CD8-positive, alpha-beta T cell (primary cell): ENCODE measurements at regions of chr15 and their contacts with region 1.

Region 1: GRCh38 chr15:31365655-31366127 is 39.1 kb downstream of the KLF13 start:
- DNase-seq: peak; percentile 59 to 92 (median 84)
- ATAC-seq: peak; percentile 47
- H3K4me3 ChIP-seq: peak overlapping the region; percentile 32 to 59
- H3K4me3 Mint-ChIP-seq: peak overlapping the region; percentile 81
- H3K27ac ChIP-seq: peak overlapping the region; percentile 68 to 93
- H3K27ac Mint-ChIP-seq: peak overlapping the region; percentile 97
- H3K4me1 ChIP-seq: peaks cover 97% of the 10 kb centered on the region
- H3K4me1 Mint-ChIP-seq: peaks cover 96% of the 10 kb centered on the region
- H3K27me3 ChIP-seq: no peaks in the 10 kb centered on the region
- H3K27me3 Mint-ChIP-seq: no peaks in the 10 kb centered on the region
- CTCF ChIP-seq: peak; percentile 57

Region 2: DNA sequence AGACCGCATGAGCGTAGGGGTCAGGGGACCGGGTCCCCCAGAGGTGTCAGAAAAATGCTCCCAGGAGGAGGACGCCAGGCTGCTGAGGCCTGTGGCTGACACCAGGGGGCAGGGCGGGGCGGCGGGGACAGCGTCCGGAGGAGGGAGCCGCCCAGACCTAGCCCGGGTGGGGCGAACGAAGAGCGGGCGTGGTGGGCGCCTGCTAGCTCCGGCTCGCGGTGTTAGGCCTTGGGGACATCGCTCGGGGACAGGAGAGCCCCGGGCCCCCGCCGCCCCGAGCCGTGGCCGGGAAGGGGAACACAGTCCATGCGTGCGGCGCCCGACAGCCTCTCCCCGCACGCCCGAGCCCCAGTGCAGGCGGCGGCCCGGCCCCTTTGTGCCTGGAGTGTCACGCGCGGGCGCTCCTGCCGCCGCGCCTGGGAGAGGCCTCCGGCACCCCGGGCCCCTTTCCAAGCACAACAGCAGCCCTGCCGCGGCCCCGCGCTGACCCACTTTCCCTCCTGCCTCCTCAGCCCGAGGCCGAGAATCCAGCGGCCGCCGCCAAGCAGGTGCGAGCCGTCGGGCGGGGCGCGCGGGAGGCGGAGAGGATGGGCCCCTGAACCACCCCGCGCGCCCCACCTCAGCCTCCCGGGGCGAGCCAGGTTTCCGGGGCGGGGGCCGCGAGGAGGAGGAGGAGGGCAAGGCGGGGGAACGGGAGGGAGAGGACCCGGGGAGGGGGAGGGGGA is 150.0 kb before region 1 on chr15:
- CTCF ChIA-PET with region 1: interaction called, 11 read pairs
- POLR2A ChIA-PET with region 1: interaction called, 5 read pairs
- intact Hi-C with region 1: loop called (anchors 2 to 5 kb)
- DNase-seq: peak; percentile 56 to 91 (median 84)
- ATAC-seq: peak; percentile 76
- H3K4me3 ChIP-seq: peak overlapping the region; percentile 32 to 55
- H3K4me3 Mint-ChIP-seq: peak overlapping the region; percentile 56
- H3K27ac ChIP-seq: peak overlapping the region; percentile 56 to 75
- H3K27ac Mint-ChIP-seq: peak overlapping the region; percentile 83
- H3K4me1 ChIP-seq: peaks cover 21% of the 10 kb centered on the region
- H3K4me1 Mint-ChIP-seq: peaks cover 30% of the 10 kb centered on the region
- H3K27me3 ChIP-seq: no peaks in the 10 kb centered on the region
- H3K27me3 Mint-ChIP-seq: no peaks in the 10 kb centered on the region
- CTCF ChIP-seq: peak; percentile 73

Region 3: GRCh38 chr15:31338879-31339557 is 26.7 kb before region 1 on chr15:
- CTCF ChIA-PET with region 1: interaction called, 286 read pairs
- POLR2A ChIA-PET with region 1: interaction called, 296 read pairs
- intact Hi-C with region 1: loop called in 1 of 2 experiments (anchors 1 kb)
- DNase-seq: peak in 2 of 9 experiments; percentile 44 to 63
- ATAC-seq: no peak
- H3K4me3 ChIP-seq: peak overlapping the region in 1 of 2 experiments; percentile 12
- H3K4me3 Mint-ChIP-seq: peak overlapping the region; percentile 45
- H3K27ac ChIP-seq: peak overlapping the region; percentile 36 to 72
- H3K27ac Mint-ChIP-seq: peak overlapping the region; percentile 86
- H3K4me1 ChIP-seq: peaks cover 99% of the 10 kb centered on the region
- H3K4me1 Mint-ChIP-seq: peaks cover 99% of the 10 kb centered on the region
- H3K27me3 ChIP-seq: no peaks in the 10 kb centered on the region
- H3K27me3 Mint-ChIP-seq: no peaks in the 10 kb centered on the region
- CTCF ChIP-seq: no peak

Region 4: GRCh38 chr15:31379042-31379441 is 13.4 kb after region 1 on chr15:
- CTCF ChIA-PET with region 1: interaction called, 35 read pairs
- POLR2A ChIA-PET with region 1: interaction called, 7 read pairs
- intact Hi-C with region 1: loop called (anchors 1 to 2 kb)
- DNase-seq: peak in 3 of 9 experiments; percentile 36 to 56 (median 40)
- ATAC-seq: peak; percentile 32
- H3K4me3 ChIP-seq: no peak overlapping the region
- H3K4me3 Mint-ChIP-seq: no peak overlapping the region
- H3K27ac ChIP-seq: peak overlapping the region in 1 of 2 experiments; percentile 64
- H3K27ac Mint-ChIP-seq: peak overlapping the region; percentile 93
- H3K4me1 ChIP-seq: peaks cover 49% of the 10 kb centered on the region
- H3K4me1 Mint-ChIP-seq: peaks cover 70% of the 10 kb centered on the region
- H3K27me3 ChIP-seq: no peaks in the 10 kb centered on the region
- H3K27me3 Mint-ChIP-seq: no peaks in the 10 kb centered on the region
- CTCF ChIP-seq: no peak

Region 5: GRCh38 chr15:31435261-31435911 is 69.7 kb after region 1 on chr15:
- CTCF ChIA-PET with region 1: interaction called, 140 read pairs
- POLR2A ChIA-PET with region 1: interaction called, 79 read pairs
- intact Hi-C with region 1: loop called (anchors 1 kb)
- DNase-seq: peak; percentile 62 to 96 (median 84)
- ATAC-seq: peak; percentile 70
- H3K4me3 ChIP-seq: peak overlapping the region; percentile 43 to 46
- H3K4me3 Mint-ChIP-seq: peak overlapping the region; percentile 80
- H3K27ac ChIP-seq: peak overlapping the region; percentile 89 to 95
- H3K27ac Mint-ChIP-seq: peak overlapping the region; percentile 98
- H3K4me1 ChIP-seq: peaks cover 66% of the 10 kb centered on the region
- H3K4me1 Mint-ChIP-seq: peaks cover 83% of the 10 kb centered on the region
- H3K27me3 ChIP-seq: no peaks in the 10 kb centered on the region
- H3K27me3 Mint-ChIP-seq: no peaks in the 10 kb centered on the region
- CTCF ChIP-seq: peak; percentile 33